K562 (cell line): ENCODE measurements at regions of chr1 and their contacts with region 1.

Region 1: GRCh38 chr1:212915245-212916091 is 34.9 kb upstream of the VASH2 start:
- DNase-seq: peak; percentile 60 to 70 (median 65)
- ATAC-seq: peak; percentile 78
- H3K4me3 ChIP-seq: no peak overlapping the region
- H3K27ac ChIP-seq: no peak overlapping the region; the same call in 2 of the 3 replicates
- H3K4me1 ChIP-seq: peaks cover 11% of the 10 kb centered on the region in 2 experiments; a peak in 4 of 5 replicates
- H3K27me3 ChIP-seq: peaks cover 2 to 16% of the 10 kb centered on the region in 2 experiments; a peak in 3 of 5 replicates
- CTCF ChIP-seq: peak; percentile 75 to 83 (median 83)
- EP300 ChIP-seq: no peak
- POLR2A ChIP-seq: no peak
- RAD21 ChIP-seq: peak; percentile 55 to 89

Region 2: GRCh38 chr1:212665241-212666115 is 250.0 kb before region 1 on chr1:
- CTCF ChIA-PET with region 1: no interaction called
- POLR2A ChIA-PET with region 1: no interaction called
- in situ Hi-C with region 1: no loop called
- intact Hi-C with region 1: loop called (anchors 2 kb)
- DNase-seq: peak; percentile 85 to 88 (median 86)
- ATAC-seq: peak; percentile 99
- H3K4me3 ChIP-seq: peak overlapping the region; percentile 40
- H3K27ac ChIP-seq: no peak overlapping the region
- H3K4me1 ChIP-seq: peaks cover 3 to 11% of the 10 kb centered on the region in 2 experiments; a peak in 4 of 5 replicates
- H3K27me3 ChIP-seq: peaks cover 13 to 35% of the 10 kb centered on the region in 2 experiments; a peak in 4 of 5 replicates
- CTCF ChIP-seq: peak; percentile 94 to 95 (median 95)
- EP300 ChIP-seq: no peak
- POLR2A ChIP-seq: no peak
- RAD21 ChIP-seq: peak; percentile 97 to 98

Region 3: DNA sequence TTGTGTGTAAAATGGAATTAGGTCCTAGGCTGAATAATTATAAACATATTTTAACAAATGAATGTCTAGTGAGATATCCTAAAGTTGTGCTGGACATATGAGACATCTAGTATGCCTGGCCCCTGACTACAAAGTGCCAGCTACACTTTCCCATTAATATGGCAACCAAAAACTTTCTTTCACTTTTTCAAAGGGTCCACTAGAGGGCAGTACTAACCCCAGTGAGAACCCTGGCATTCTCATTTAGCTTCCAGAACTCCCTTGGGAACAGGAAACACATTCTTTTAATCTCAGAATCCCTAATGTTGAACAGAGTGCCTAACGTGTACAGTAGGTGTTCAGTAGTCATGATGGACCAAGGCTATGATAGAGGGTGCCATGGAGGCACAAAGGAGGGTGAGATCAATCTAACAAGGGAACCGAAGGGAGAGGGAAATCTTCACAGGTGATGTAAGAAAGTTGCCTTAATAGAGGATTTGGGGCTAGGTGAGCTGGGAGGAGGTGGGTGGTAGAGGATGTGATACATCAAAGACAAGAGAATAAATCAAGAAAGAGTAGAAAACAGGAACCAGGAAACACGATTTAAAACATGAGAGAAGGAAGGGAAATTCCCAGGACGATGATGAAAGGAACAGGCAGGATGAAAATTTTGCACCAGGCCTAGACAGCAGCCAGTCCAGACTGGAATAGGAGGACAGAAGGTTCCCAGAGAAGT is 165.5 kb before region 1 on chr1:
- CTCF ChIA-PET with region 1: no interaction called
- POLR2A ChIA-PET with region 1: no interaction called
- in situ Hi-C with region 1: no loop called
- intact Hi-C with region 1: loop called (anchors 5 kb)
- DNase-seq: peak; percentile 64 to 68 (median 67)
- ATAC-seq: peak; percentile 86
- H3K4me3 ChIP-seq: no peak overlapping the region
- H3K27ac ChIP-seq: no peak overlapping the region
- H3K4me1 ChIP-seq: peaks cover 0 to 2% of the 10 kb centered on the region in 2 experiments; a peak in 1 of 5 replicates
- H3K27me3 ChIP-seq: no peaks in the 10 kb centered on the region
- CTCF ChIP-seq: peak; percentile 71 to 83 (median 82)
- EP300 ChIP-seq: 0 out of 2 replicates have a peak, but pooled peaks have one; percentile 28
- POLR2A ChIP-seq: no peak
- RAD21 ChIP-seq: peak; percentile 54 to 77

Region 4: GRCh38 chr1:212791676-212792395 is 123.6 kb before region 1 on chr1 and contains the starts of genes NSL1 and TATDN3:
- CTCF ChIA-PET with region 1: no interaction called
- POLR2A ChIA-PET with region 1: no interaction called
- in situ Hi-C with region 1: no loop called
- intact Hi-C with region 1: loop called (anchors 2 kb)
- DNase-seq: peak; percentile 75 to 98 (median 80)
- ATAC-seq: peak; percentile 84
- H3K4me3 ChIP-seq: peak within 1 kb of the TSS; percentile 72
- H3K27ac ChIP-seq: peak within 1 kb of the TSS; percentile 92
- H3K4me1 ChIP-seq: peaks cover 17 to 30% of the 10 kb centered on the region in 2 experiments
- H3K27me3 ChIP-seq: no peaks in the 10 kb centered on the region
- CTCF ChIP-seq: peak in 1 of 3 experiments; percentile 21; a peak in 2 of 6 replicates
- EP300 ChIP-seq: peak; percentile 70
- POLR2A ChIP-seq: peak; percentile 98
- RAD21 ChIP-seq: peak in 1 of 2 experiments; percentile 8; a peak in 1 of 4 replicates
- polyA plus RNA-seq, gene NSL1: 85.9 to 105 TPM
- polyA plus RNA-seq, gene TATDN3: 68.1 to 79.9 TPM

Region 5: DNA sequence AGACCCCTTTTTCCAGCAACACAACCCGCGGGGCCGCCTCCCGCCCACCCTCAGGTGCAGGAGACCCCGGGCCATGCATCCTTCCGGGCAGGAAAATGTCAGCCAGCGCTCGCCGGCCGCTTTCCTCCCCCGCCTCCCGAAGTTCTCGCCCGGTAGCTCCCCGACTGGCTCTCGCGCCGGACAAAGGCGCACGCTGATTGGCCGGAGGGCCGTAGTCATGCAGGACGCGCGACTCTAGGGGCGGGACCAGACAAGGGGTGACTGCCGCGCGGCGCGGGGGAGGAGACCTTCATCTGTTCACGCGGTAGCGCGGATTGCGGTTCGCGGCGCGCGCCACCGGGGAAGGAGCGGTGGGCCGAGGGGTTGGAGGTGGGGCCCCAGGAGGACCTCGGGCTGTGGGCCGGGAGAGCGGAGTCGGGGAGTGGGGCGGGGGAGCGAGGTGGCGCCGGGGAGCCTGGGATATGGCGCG is 57.4 kb before region 1 on chr1 and contains the start of gene FLVCR1:
- CTCF ChIA-PET with region 1: no interaction called
- POLR2A ChIA-PET with region 1: no interaction called
- in situ Hi-C with region 1: no loop called
- intact Hi-C with region 1: loop called (anchors 5 kb)
- DNase-seq: peak; percentile 99 to 100 (median 100)
- ATAC-seq: peak; percentile 96
- H3K4me3 ChIP-seq: peak within 1 kb of the TSS; percentile 69
- H3K27ac ChIP-seq: peak within 1 kb of the TSS; percentile 85
- H3K4me1 ChIP-seq: peaks cover 29 to 31% of the 10 kb centered on the region in 2 experiments; a peak in 4 of 5 replicates
- H3K27me3 ChIP-seq: no peaks in the 10 kb centered on the region
- CTCF ChIP-seq: peak in 1 of 3 experiments; percentile 1; a peak in 1 of 6 replicates
- EP300 ChIP-seq: peak; percentile 6; the same call in 1 of the 2 replicates
- POLR2A ChIP-seq: peak; percentile 91
- RAD21 ChIP-seq: no peak
- polyA plus RNA-seq, gene FLVCR1: 5.2 to 5.6 TPM

Region 6: DNA sequence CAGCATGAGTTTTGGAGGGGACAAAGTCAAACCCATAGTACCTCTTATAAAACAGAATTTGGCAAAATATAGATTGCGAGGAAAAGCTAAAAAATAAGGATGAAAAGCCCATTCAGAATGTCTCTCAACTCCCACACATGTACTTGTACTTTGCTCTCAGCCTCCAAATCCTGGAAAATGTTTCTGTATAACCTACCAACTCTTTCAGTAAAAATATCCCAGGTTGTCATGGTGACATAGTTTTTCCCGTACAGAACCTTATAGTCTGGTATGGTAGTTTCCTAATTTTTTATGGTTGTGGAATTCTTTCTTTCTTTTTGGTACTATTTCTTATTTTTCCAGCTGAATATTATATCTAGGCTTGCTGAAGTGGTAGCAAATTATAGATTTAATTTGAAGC is 120.1 kb after region 1 on chr1:
- CTCF ChIA-PET with region 1: no interaction called
- POLR2A ChIA-PET with region 1: no interaction called
- in situ Hi-C with region 1: no loop called
- intact Hi-C with region 1: no loop called
- DNase-seq: no peak
- ATAC-seq: no peak
- H3K4me3 ChIP-seq: no peak overlapping the region
- H3K27ac ChIP-seq: no peak overlapping the region
- H3K4me1 ChIP-seq: no peaks in the 10 kb centered on the region; a peak in 3 of 5 replicates
- H3K27me3 ChIP-seq: no peaks in the 10 kb centered on the region
- CTCF ChIP-seq: no peak
- EP300 ChIP-seq: no peak
- POLR2A ChIP-seq: no peak
- RAD21 ChIP-seq: no peak

Region 7: DNA sequence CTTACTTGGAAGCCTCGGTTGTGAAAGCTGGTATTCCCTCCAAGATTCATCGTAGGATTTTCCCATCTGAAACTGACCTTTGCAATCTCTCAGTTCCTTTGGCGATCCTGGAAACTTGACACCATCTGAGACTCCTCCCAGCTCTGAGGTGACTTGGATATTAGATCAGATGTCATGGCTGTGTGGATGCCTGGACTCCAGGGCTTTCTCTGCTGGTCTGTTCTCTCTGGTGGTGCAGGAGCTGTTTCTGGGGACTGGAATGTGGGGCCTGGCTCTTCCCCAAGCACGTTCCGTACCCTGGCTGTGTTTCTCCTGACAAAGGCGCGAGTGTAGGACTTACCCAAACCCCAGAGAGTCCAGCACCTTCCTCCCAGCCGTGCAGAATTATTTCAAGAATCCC is 387.8 kb after region 1 on chr1:
- CTCF ChIA-PET with region 1: no interaction called
- POLR2A ChIA-PET with region 1: no interaction called
- in situ Hi-C with region 1: no loop called
- intact Hi-C with region 1: no loop called
- DNase-seq: no peak
- ATAC-seq: peak; percentile 78
- H3K4me3 ChIP-seq: no peak overlapping the region
- H3K27ac ChIP-seq: no peak overlapping the region
- H3K4me1 ChIP-seq: no peaks in the 10 kb centered on the region
- H3K27me3 ChIP-seq: no peaks in the 10 kb centered on the region
- CTCF ChIP-seq: no peak
- EP300 ChIP-seq: no peak
- POLR2A ChIP-seq: no peak
- RAD21 ChIP-seq: no peak